KBM-7 (cell line): ENCODE measurements at regions of chr3 and their contacts with region 1.

Region 1: DNA sequence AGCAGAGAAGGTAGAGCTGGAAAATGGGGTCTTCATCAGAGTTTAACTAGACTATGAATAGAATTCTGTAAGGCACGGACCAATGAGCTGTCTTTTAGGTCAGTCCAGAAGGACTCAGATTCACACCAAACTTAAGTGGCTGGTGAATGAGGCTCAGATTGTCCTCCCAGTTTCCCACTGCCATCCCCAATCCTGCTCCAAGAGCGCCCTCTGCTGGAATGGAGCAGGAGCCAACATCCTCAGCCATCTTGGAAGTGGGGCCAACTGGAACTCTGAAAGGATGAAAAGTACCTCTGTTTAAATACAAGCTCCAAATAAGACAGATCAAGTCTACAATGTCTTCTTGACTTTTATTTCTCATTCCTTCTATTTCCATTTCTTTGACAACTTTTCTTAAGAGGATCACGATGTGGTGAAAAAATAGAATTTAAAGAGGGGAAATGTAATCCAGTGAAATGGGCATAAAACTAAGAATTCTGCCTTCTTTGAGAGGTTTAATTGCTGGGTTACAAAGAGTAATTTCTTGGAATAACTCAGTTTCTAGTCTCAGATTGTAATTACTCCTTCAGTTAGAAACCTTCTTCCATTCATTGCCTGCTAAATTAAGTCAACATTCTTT is 217.1 kb upstream of the TPRG1 start:
- DNase-seq: peak; percentile 84

Region 2: GRCh38 chr3:187738331-187739093 is 1216.2 kb before region 1 on chr3:
- in situ Hi-C with region 1: loop called (anchors 10 kb)
- DNase-seq: peak; percentile 89

Region 3: GRCh38 chr3:189148081-189148507 is 193.4 kb after region 1 on chr3:
- in situ Hi-C with region 1: loop called (anchors 25 kb)
- DNase-seq: peak; percentile 71